Left ventricle myocardium superior (tissue), 1 donor: ENCODE measurements at regions of chr1 and their contacts with region 1.

Region 1: GRCh38 chr1:201999625-202000238 is 10.7 kb upstream of the ELF3 start:
- DNase-seq: no peak
- ATAC-seq: peak; percentile 64

Region 2: GRCh38 chr1:202046227-202046801 is 46.6 kb after region 1 on chr1:
- intact Hi-C with region 1: no loop called
- DNase-seq: no peak
- ATAC-seq: no peak

Region 3: DNA sequence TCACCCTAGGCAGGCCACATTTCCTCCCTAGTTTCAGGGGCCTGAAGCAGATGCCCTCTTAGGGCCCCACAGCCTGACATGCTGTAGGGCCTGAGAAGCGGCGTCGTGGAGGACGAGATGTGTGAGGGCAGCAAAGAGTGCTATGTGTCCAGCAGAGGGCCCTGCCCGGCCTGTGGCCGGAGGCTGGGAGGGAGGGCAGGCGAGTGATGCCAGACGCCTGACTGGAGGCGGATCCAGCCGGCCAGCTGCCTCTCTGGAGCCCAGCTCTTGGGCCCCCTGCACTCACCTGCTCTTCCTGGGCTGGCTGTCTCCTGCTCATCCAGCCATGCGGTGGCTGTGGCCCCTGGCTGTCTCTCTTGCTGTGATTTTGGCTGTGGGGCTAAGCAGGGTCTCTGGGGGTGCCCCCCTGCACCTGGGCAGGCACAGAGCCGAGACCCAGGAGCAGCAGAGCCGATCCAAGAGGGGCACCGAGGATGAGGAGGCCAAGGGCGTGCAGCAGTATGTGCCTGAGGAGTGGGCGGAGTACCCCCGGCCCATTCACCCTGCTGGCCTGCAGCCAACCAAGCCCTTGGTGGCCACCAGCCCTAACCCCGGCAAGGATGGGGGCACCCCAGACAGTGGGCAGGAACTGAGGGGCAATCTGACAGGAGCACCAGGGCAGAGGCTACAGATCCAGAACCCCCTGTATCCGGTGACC is 123.1 kb after region 1 on chr1 and contains the start of gene GPR37L1:
- intact Hi-C with region 1: loop called (anchors 5 kb)
- DNase-seq: peak; percentile 72
- ATAC-seq: peak; percentile 68
- total RNA-seq, gene GPR37L1: 0.07 TPM